IMR-90 (cell line): ENCODE measurements at regions of chr11 and their contacts with region 1.

Region 1: DNA sequence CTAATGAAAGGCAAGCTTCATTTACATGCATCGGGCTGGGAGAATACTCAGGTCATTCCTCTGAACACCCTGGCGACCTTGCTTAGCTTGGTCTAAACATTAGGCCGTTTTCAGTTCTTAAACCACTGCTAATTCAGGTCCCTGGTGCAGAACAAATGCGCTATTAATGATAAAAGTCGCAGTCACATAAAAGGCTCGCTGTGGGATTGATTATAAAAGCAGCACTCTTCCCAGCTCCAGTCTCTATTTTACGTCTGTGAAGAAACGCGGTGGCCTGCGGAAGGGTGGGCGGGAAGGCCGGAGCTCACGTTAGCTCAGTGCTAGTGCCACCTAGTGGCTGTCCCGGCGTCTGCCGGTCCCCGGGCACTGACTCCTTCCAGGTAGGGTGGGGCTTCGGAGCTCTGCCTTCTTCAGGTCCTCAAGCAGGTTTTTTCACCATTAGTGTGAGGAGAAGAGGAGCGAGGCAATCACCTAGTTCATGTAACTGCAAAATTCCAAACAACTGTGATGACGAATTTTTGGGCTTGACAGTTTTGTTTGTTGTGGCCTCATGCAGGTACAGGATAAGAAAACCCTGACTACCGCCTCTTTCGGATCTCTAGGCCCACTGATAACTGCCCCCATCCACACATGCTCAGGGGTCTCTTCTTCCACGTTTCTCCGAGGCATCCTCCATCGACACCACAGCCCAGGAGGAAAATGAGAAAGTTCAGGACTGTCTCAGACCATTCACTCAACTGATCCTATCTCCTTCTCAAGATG is 66.5 kb upstream of the CLMP start:
- DNase-seq: peak; percentile 67
- ATAC-seq: peak; percentile 98
- H3K4me3 ChIP-seq: peak overlapping the region; percentile 31; the same call in 1 of the 2 replicates
- H3K27ac ChIP-seq: no peak overlapping the region
- H3K4me1 ChIP-seq: peaks cover 3% of the 10 kb centered on the region; the same call in 1 of the 2 replicates
- H3K27me3 ChIP-seq: peaks cover 7% of the 10 kb centered on the region; the same call in 1 of the 2 replicates
- CTCF ChIP-seq: peak; percentile 89
- POLR2A ChIP-seq: no peak
- RAD21 ChIP-seq: peak; percentile 86

Region 2: GRCh38 chr11:122954455-122954854 is 307.1 kb before region 1 on chr11:
- CTCF ChIA-PET with region 1: no interaction called
- POLR2A ChIA-PET with region 1: no interaction called
- dilution Hi-C with region 1: no loop called
- in situ Hi-C with region 1: no loop called
- intact Hi-C with region 1: no loop called
- DNase-seq: no peak
- ATAC-seq: no peak
- H3K4me3 ChIP-seq: no peak overlapping the region
- H3K27ac ChIP-seq: no peak overlapping the region
- H3K4me1 ChIP-seq: no peaks in the 10 kb centered on the region
- H3K27me3 ChIP-seq: peaks cover 30% of the 10 kb centered on the region
- CTCF ChIP-seq: no peak
- POLR2A ChIP-seq: no peak
- RAD21 ChIP-seq: no peak

Region 3: GRCh38 chr11:123103326-123103980 is 158.1 kb before region 1 on chr11:
- CTCF ChIA-PET with region 1: interaction called, 19 read pairs
- POLR2A ChIA-PET with region 1: no interaction called
- dilution Hi-C with region 1: loop called (anchors 25 kb)
- in situ Hi-C with region 1: no loop called
- intact Hi-C with region 1: no loop called
- DNase-seq: peak; percentile 75
- ATAC-seq: peak; percentile 50
- H3K4me3 ChIP-seq: no peak overlapping the region
- H3K27ac ChIP-seq: no peak overlapping the region
- H3K4me1 ChIP-seq: peaks cover 10% of the 10 kb centered on the region
- H3K27me3 ChIP-seq: no peaks in the 10 kb centered on the region
- CTCF ChIP-seq: peak; percentile 75
- POLR2A ChIP-seq: no peak
- RAD21 ChIP-seq: peak; percentile 83

Region 4: GRCh38 chr11:123238297-123238696 is 23.2 kb before region 1 on chr11:
- CTCF ChIA-PET with region 1: no interaction called
- POLR2A ChIA-PET with region 1: no interaction called
- dilution Hi-C with region 1: no loop called
- in situ Hi-C with region 1: no loop called
- intact Hi-C with region 1: no loop called
- DNase-seq: peak; percentile 61
- ATAC-seq: peak; percentile 21; the same call in 1 of the 2 replicates
- H3K4me3 ChIP-seq: no peak overlapping the region
- H3K27ac ChIP-seq: no peak overlapping the region
- H3K4me1 ChIP-seq: peaks cover 25% of the 10 kb centered on the region
- H3K27me3 ChIP-seq: no peaks in the 10 kb centered on the region
- CTCF ChIP-seq: no peak
- POLR2A ChIP-seq: no peak
- RAD21 ChIP-seq: no peak

Region 5: GRCh38 chr11:123413636-123414035 is 152.1 kb after region 1 on chr11:
- CTCF ChIA-PET with region 1: no interaction called
- POLR2A ChIA-PET with region 1: no interaction called
- dilution Hi-C with region 1: no loop called
- in situ Hi-C with region 1: no loop called
- intact Hi-C with region 1: no loop called
- DNase-seq: peak; percentile 23
- ATAC-seq: no peak
- H3K4me3 ChIP-seq: no peak overlapping the region
- H3K27ac ChIP-seq: no peak overlapping the region
- H3K4me1 ChIP-seq: no peaks in the 10 kb centered on the region
- H3K27me3 ChIP-seq: peaks cover 23% of the 10 kb centered on the region
- CTCF ChIP-seq: no peak
- POLR2A ChIP-seq: no peak
- RAD21 ChIP-seq: no peak